ENCODE measurements at regions of chr17 and their contacts with region 1.

Region 1: GRCh38 chr17:7673239-7673638 is 14.1 kb downstream of the TP53 start:
- DNase-seq: no peak
- H3K4me3 ChIP-seq: no peak overlapping the region
- H3K27ac ChIP-seq: no peak overlapping the region
- H3K4me1 ChIP-seq: no peaks in the 10 kb centered on the region
- H3K27me3 ChIP-seq: no peaks in the 10 kb centered on the region
- CTCF ChIP-seq: no peak

Region 2: DNA sequence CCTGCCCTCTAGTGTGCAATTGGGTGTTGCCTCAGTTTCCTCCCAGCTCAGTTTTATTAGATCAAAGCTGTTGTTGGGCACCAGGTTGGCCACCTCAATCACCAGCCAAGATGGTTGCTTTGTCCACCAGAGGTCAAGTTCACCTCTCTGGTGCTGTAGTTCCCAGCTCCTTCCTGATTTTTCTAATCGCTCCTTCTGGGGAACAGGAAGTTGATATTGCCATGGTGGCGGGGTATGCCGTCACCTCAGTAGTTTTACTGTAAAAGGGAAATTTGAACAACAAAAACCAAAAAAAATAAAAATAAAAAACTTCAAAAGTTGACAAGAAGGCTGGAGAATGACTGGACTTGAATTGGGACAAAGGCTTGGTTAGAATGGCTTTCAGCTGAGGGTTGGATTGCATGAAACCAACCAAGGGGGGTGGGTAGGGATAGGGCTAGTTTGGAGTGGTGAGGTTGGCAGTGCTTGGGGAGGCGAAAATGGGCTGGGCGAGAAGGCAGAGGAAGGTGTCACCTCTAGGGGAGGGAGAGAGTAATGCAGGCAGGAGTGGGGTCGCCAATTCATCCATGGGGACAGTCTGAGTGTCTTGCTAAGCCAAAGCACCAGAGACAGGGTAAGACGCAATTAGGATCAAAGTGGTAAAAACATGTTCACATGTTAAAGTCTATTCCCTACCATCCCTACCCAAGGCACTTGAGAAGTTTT is 38.0 kb after region 1 on chr17:
- intact Hi-C with region 1: no loop called
- DNase-seq: no peak
- H3K4me3 ChIP-seq: no peak overlapping the region
- H3K27ac ChIP-seq: no peak overlapping the region
- H3K4me1 ChIP-seq: peaks cover 0 to 2% (median under 1%) of the 10 kb centered on the region in 4 donors
- H3K27me3 ChIP-seq: peaks cover 0 to 96% of the 10 kb centered on the region in 2 donors
- CTCF ChIP-seq: no peak

Region 3: GRCh38 chr17:9575381-9576101 is 1902.3 kb after region 1 on chr17 and contains the start of gene STX8:
- intact Hi-C with region 1: loop called (anchors 10 kb)
- DNase-seq: peak; percentile 91 to 94
- H3K4me3 ChIP-seq: peak within 1 kb of the TSS; percentile 63 to 72
- H3K27ac ChIP-seq: peak within 1 kb of the TSS; percentile 58 to 72
- H3K4me1 ChIP-seq: peaks cover 3 to 24% (median 7%) of the 10 kb centered on the region in 4 donors
- H3K27me3 ChIP-seq: no peaks in the 10 kb centered on the region
- CTCF ChIP-seq: peak in 1 of 2 experiments; percentile 12